ENCODE measurements at regions of chr4 and their contacts with region 1.

Region 1: DNA sequence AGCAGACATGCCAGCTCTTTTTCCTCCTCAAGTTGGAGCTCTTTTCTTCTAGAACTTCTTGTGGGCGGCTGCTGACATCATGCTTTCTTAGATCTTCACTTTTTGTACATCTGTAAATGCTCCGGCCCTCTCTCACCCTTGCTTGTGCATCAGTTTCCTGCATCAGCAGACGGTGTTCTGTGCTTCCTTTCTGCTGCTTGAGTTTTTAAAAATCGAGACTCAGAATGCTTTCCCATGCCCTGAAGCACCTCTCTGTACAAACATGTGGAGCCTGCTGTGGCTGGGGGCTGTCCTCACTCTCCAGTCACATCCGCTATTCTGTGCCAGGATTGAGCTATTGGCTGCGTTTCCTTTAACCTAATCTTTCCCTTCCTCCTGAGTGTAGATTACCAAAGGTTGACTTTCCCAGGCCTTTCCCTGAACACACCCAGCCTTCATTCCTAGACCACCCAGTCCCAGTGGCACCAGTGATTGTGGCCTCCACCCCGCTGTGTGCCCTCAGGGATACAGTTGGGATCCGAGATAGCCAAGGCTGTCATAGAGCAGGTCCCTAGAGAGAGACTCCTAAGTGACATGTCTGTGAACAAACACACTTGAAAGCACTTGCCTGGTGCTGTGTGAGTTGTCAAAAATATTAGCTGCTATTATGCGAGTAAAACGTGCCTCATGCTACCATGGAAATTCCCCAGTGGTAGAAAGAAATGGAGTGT is 41.9 kb downstream of the TNIP2 start:
- DNase-seq: peak; percentile 45 to 67 (median 53)
- H3K4me3 ChIP-seq: no peak overlapping the region
- H3K4me3 Mint-ChIP-seq: peak overlapping the region in 5 of 8 donors; percentile 15 to 57 (median 44)
- H3K27ac ChIP-seq: peak overlapping the region; percentile 12
- H3K27ac Mint-ChIP-seq: peak overlapping the region; percentile 68 to 94 (median 88)
- H3K4me1 ChIP-seq: peaks cover 18% of the 10 kb centered on the region
- H3K4me1 Mint-ChIP-seq: peaks cover 16 to 25% (median 21%) of the 10 kb centered on the region in 4 donors
- H3K27me3 ChIP-seq: no peaks in the 10 kb centered on the region
- H3K27me3 Mint-ChIP-seq: no peaks in the 10 kb centered on the region

Region 2: GRCh38 chr4:2354118-2354517 is 360.1 kb before region 1 on chr4:
- CTCF ChIA-PET with region 1: no interaction called
- POLR2A ChIA-PET with region 1: no interaction called
- intact Hi-C with region 1: no loop called
- DNase-seq: peak in 3 of 5 donors; percentile 11 to 13 (median 11)
- H3K4me3 ChIP-seq: no peak overlapping the region
- H3K4me3 Mint-ChIP-seq: no peak overlapping the region
- H3K27ac ChIP-seq: no peak overlapping the region
- H3K27ac Mint-ChIP-seq: no peak overlapping the region
- H3K4me1 ChIP-seq: no peaks in the 10 kb centered on the region
- H3K4me1 Mint-ChIP-seq: peaks cover 0 to 16% (median 6%) of the 10 kb centered on the region in 4 donors
- H3K27me3 ChIP-seq: no peaks in the 10 kb centered on the region
- H3K27me3 Mint-ChIP-seq: no peaks in the 10 kb centered on the region

Region 3: GRCh38 chr4:2745981-2746806 is 32.0 kb after region 1 on chr4:
- CTCF ChIA-PET with region 1: no interaction called
- POLR2A ChIA-PET with region 1: no interaction called
- intact Hi-C with region 1: loop called (anchors 5 kb)
- DNase-seq: peak; percentile 77 to 98 (median 80)
- H3K4me3 ChIP-seq: no peak overlapping the region
- H3K4me3 Mint-ChIP-seq: peak overlapping the region; percentile 15 to 79 (median 58)
- H3K27ac ChIP-seq: peak overlapping the region; percentile 85
- H3K27ac Mint-ChIP-seq: peak overlapping the region; percentile 93 to 98 (median 97)
- H3K4me1 ChIP-seq: peaks cover 27% of the 10 kb centered on the region
- H3K4me1 Mint-ChIP-seq: peaks cover 20 to 47% (median 30%) of the 10 kb centered on the region in 4 donors
- H3K27me3 ChIP-seq: no peaks in the 10 kb centered on the region
- H3K27me3 Mint-ChIP-seq: no peaks in the 10 kb centered on the region